Right cardiac atrium (tissue), 5 donors: ENCODE measurements at regions of chr11 and their contacts with region 1.

Region 1: GRCh38 chr11:12248338-12248737 is 129.0 kb upstream of the PARVA start:
- DNase-seq: peak; percentile 83 to 95 (median 93)
- ATAC-seq: peak; percentile 61 to 80
- H3K4me3 ChIP-seq: no peak overlapping the region
- H3K27ac ChIP-seq: peak overlapping the region; percentile 26
- H3K4me1 ChIP-seq: peaks cover 28% of the 10 kb centered on the region
- H3K27me3 ChIP-seq: no peaks in the 10 kb centered on the region

Region 2: GRCh38 chr11:11677672-11678348 is 570.5 kb before region 1 on chr11:
- intact Hi-C with region 1: no loop called
- DNase-seq: no peak
- ATAC-seq: no peak
- H3K4me3 ChIP-seq: no peak overlapping the region
- H3K27ac ChIP-seq: no peak overlapping the region
- H3K4me1 ChIP-seq: peaks cover 3% of the 10 kb centered on the region
- H3K27me3 ChIP-seq: no peaks in the 10 kb centered on the region

Region 3: DNA sequence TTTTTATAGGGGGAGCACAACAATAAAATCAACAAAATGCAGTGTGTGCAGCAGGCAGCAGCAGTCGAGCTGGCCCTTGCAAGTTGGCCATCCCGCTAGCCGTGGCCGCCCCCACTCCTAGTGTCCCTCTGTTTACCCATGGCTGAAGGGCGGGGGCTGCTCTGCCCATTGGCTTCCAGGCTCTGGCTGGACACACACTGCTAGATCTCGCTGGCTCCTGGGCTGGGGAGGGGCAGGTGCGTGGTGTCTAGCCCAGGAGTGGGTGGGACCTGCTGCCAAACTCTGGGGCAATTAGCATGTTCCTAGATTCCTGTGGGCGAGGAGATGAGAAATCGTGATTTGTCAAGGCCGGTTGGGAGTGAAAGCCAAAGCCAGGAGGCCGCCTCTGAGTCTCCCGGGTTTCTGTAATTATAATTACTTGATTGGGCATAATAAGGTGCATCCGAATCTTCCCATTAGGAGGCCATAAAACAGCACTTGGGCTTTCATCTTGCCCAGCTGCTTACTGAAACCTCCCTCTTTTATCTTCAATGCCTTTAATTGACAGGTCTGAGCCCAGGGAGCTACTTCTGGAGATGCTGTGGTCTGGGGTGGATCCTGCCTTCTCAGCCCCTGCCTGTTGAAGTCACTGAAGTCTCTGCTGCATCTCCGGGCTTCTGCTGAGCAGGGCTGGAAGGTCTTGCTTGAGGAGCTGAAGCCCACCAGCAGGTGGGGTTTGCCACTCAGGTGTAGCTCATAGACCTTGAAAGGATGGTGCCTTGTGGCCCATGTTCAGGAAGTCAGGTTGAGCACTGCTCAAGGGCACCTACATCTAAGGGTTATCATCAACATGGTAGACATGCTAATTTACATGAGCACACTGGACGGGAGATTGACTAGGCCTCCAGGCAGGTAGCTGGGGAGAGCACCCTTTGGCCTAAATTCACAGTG is 195.4 kb before region 1 on chr11:
- intact Hi-C with region 1: loop called in 1 of 4 experiments (anchors 10 kb)
- DNase-seq: no peak
- ATAC-seq: no peak
- H3K4me3 ChIP-seq: no peak overlapping the region
- H3K27ac ChIP-seq: no peak overlapping the region
- H3K4me1 ChIP-seq: peaks cover 5% of the 10 kb centered on the region
- H3K27me3 ChIP-seq: no peaks in the 10 kb centered on the region

Region 4: DNA sequence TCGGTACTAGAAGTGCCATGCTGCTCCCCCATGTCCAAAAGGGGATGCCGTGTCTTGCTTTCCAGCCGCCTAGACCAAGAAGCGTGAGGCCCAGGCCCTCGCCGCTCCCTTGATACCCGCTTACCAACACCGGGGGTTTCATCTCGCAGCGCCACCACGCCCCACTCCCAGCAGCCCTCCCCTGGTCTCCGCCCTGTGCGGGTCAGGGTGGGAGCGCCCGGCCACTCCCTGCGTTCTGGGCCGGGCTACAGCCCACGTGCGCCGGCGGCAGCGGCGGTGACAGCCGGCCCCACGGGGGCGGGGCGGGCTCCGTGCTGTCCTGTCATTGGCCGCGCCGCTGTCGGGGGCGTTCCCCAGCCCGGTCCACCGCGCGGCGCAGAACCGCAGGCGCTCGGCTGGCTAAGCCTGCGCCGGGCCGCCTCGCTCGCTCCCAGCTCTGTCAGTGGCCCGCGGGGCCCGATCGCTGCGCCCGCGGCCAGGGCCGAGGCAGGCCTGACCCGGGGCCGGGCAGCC is 138.1 kb before region 1 on chr11 and contains the start of gene MICAL2:
- intact Hi-C with region 1: loop called in 1 of 4 experiments (anchors 10 kb)
- DNase-seq: peak; percentile 93 to 97 (median 96)
- ATAC-seq: peak; percentile 97 to 98
- H3K4me3 ChIP-seq: peak within 1 kb of the TSS; percentile 87
- H3K27ac ChIP-seq: peak within 1 kb of the TSS; percentile 31
- H3K4me1 ChIP-seq: peaks cover 16% of the 10 kb centered on the region
- H3K27me3 ChIP-seq: no peaks in the 10 kb centered on the region
- total RNA-seq, gene MICAL2: 92.1 to 115 (median 95.1) TPM